ENCODE measurements at regions of chr5 and their contacts with region 1.

Region 1: DNA sequence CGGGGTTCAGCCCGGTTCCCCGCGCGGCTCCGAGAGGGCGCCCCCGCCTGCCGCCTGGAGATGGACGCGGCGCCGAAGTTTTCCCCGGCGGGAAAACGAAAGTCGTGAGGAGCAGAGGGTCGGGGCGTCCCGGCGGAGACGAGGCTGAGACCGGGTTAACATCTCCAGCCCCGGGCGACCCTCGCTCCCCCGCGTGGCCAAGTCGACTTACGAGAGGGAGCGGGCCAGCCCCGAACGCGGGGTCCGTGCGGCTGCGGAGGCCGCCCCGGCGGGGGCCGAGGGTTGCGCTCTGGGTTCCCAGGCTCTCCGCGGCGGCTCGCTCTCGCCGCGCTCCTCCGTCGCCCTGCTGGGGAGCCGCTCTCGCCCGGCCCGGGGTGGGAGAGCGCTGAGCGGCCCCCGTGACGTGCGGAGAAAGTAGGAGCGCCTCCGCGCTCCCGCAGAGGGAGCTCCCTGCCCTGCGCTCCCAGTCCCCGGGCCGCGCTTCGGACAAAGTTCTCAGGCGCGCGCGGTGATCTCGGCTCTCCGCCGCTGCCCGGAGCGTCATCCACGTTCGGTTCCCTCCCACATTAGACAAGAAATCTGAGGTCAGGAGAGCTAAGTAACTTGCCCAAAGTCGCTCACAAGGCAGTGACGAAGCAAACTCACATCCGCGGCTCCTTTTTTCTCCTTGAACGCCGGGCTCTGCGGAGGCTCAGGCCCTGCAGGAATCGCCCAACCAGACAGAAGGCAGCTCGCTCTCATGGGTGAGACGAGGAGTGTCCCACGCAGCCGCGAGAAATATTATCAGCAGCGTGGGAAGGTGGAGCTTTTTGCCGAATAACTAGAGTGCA is 1.2 kb upstream of the GCNT4 start:
- DNase-seq: peak; percentile 35 to 79 (median 68)
- ATAC-seq: peak; percentile 45
- H3K4me3 ChIP-seq: peak overlapping the region; percentile 65 to 71
- H3K4me3 Mint-ChIP-seq: peak overlapping the region; percentile 93
- H3K27ac ChIP-seq: peak overlapping the region; percentile 75 to 82
- H3K27ac Mint-ChIP-seq: peak overlapping the region; percentile 98
- H3K4me1 ChIP-seq: peaks cover 73% of the 10 kb centered on the region
- H3K4me1 Mint-ChIP-seq: peaks cover 84% of the 10 kb centered on the region
- H3K27me3 ChIP-seq: peaks cover 0 to 4% of the 10 kb centered on the region in 2 experiments
- H3K27me3 Mint-ChIP-seq: no peaks in the 10 kb centered on the region
- CTCF ChIP-seq: peak; percentile 5

Region 2: GRCh38 chr5:74865804-74866595 is 187.5 kb before region 1 on chr5 and contains the start of gene FAM169A:
- CTCF ChIA-PET with region 1: interaction called, 4 read pairs
- POLR2A ChIA-PET with region 1: no interaction called
- intact Hi-C with region 1: loop called (anchors 5 to 10 kb)
- DNase-seq: peak; percentile 22 to 81 (median 56)
- ATAC-seq: peak; percentile 74
- H3K4me3 ChIP-seq: peak within 1 kb of the TSS; percentile 78 to 86
- H3K4me3 Mint-ChIP-seq: peak within 1 kb of the TSS; percentile 94
- H3K27ac ChIP-seq: peak within 1 kb of the TSS; percentile 58 to 71
- H3K27ac Mint-ChIP-seq: peak within 1 kb of the TSS; percentile 92
- H3K4me1 ChIP-seq: peaks cover 24% of the 10 kb centered on the region
- H3K4me1 Mint-ChIP-seq: peaks cover 40% of the 10 kb centered on the region
- H3K27me3 ChIP-seq: no peaks in the 10 kb centered on the region
- H3K27me3 Mint-ChIP-seq: no peaks in the 10 kb centered on the region
- CTCF ChIP-seq: no peak
- total RNA-seq, gene FAM169A: 21.0 to 21.6 TPM

Region 3: DNA sequence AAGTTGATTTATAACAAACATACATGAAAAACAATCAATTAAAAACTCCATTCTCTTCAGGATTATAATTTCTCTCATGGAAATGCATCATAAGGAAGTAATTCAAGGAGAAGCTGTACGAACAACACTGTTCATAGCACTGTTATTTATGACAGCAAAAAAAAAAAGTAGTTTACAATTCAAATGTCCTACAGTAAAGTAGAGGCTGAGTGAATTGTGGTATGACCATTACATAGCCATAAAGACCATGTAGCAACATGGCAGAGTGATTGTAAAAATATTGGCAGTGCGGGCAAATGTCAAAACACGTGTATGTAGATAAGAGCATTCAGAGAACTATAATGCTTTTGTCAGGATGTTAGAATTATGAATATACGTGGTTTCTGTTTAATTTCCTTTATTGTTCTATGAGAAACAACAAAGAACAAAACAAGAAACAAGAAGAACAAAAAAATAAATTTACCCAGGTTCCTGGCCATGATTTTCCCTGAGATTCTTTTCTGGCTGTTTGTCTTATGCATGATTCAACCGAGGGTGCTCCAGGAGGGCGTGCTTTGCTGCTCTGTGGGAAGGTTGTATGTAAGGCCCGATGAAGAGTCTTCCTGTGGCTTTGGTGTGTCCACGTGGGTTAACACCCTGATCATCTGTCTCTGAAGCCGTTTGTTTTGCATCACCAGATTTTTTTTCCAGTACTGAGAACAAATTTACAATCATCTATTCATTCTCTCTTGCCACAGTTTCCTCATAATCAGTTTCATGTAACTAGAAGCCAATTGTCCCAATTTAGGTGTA is 30.0 kb before region 1 on chr5:
- CTCF ChIA-PET with region 1: interaction called, 13 read pairs
- POLR2A ChIA-PET with region 1: interaction called, 3 read pairs
- intact Hi-C with region 1: no loop called
- DNase-seq: peak in 8 of 9 experiments; percentile 18 to 81 (median 52)
- ATAC-seq: peak; percentile 79
- H3K4me3 ChIP-seq: no peak overlapping the region
- H3K4me3 Mint-ChIP-seq: peak overlapping the region; percentile 63
- H3K27ac ChIP-seq: peak overlapping the region in 1 of 2 experiments; percentile 42
- H3K27ac Mint-ChIP-seq: peak overlapping the region; percentile 90
- H3K4me1 ChIP-seq: peaks cover 34% of the 10 kb centered on the region
- H3K4me1 Mint-ChIP-seq: peaks cover 55% of the 10 kb centered on the region
- H3K27me3 ChIP-seq: no peaks in the 10 kb centered on the region
- H3K27me3 Mint-ChIP-seq: no peaks in the 10 kb centered on the region
- CTCF ChIP-seq: no peak

Region 4: DNA sequence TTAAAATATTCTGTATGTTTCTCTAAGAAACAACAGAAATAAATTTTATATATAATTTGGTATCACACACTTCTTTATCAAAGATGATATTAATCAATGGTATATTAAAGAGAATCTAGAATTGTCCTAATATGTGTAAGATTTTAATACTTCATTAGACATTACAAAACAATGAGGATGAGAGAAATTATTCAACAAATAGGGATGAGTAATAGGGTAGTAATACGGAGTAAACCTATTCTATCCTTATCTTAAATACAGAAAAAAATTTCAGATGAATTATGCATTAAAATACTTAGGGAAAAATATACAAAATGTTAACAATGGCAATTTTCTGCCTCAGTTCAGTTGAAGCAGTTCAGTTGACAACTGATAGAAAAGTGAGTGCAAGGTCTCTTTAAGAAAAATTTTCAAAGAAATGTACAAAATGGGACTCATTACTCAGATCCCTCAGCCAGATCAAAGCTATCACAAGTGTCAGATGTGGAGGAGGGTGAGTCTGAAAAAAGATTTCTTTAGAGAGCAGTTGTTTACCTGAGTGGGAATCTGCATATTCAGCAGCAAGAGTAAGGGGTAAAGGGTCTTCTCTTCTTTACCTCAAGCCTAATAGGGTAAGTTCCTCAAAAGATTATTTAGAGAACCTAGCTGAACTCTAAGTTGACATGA is 55.5 kb after region 1 on chr5:
- CTCF ChIA-PET with region 1: interaction called, 7 read pairs
- POLR2A ChIA-PET with region 1: interaction called, 3 read pairs
- intact Hi-C with region 1: loop called (anchors 5 kb)
- DNase-seq: peak in 2 of 9 experiments; percentile 12 to 31
- ATAC-seq: peak; percentile 36
- H3K4me3 ChIP-seq: no peak overlapping the region
- H3K4me3 Mint-ChIP-seq: no peak overlapping the region
- H3K27ac ChIP-seq: no peak overlapping the region
- H3K27ac Mint-ChIP-seq: peak overlapping the region; percentile 15
- H3K4me1 ChIP-seq: peaks cover 14% of the 10 kb centered on the region
- H3K4me1 Mint-ChIP-seq: peaks cover 17% of the 10 kb centered on the region
- H3K27me3 ChIP-seq: no peaks in the 10 kb centered on the region
- H3K27me3 Mint-ChIP-seq: no peaks in the 10 kb centered on the region
- CTCF ChIP-seq: no peak

Region 5: GRCh38 chr5:75130818-75131349 is 77.4 kb after region 1 on chr5:
- CTCF ChIA-PET with region 1: no interaction called
- POLR2A ChIA-PET with region 1: no interaction called
- intact Hi-C with region 1: no loop called
- DNase-seq: no peak
- ATAC-seq: no peak
- H3K4me3 ChIP-seq: no peak overlapping the region
- H3K4me3 Mint-ChIP-seq: no peak overlapping the region
- H3K27ac ChIP-seq: no peak overlapping the region
- H3K27ac Mint-ChIP-seq: no peak overlapping the region
- H3K4me1 ChIP-seq: no peaks in the 10 kb centered on the region
- H3K4me1 Mint-ChIP-seq: no peaks in the 10 kb centered on the region
- H3K27me3 ChIP-seq: no peaks in the 10 kb centered on the region
- H3K27me3 Mint-ChIP-seq: no peaks in the 10 kb centered on the region
- CTCF ChIP-seq: no peak

Region 6: DNA sequence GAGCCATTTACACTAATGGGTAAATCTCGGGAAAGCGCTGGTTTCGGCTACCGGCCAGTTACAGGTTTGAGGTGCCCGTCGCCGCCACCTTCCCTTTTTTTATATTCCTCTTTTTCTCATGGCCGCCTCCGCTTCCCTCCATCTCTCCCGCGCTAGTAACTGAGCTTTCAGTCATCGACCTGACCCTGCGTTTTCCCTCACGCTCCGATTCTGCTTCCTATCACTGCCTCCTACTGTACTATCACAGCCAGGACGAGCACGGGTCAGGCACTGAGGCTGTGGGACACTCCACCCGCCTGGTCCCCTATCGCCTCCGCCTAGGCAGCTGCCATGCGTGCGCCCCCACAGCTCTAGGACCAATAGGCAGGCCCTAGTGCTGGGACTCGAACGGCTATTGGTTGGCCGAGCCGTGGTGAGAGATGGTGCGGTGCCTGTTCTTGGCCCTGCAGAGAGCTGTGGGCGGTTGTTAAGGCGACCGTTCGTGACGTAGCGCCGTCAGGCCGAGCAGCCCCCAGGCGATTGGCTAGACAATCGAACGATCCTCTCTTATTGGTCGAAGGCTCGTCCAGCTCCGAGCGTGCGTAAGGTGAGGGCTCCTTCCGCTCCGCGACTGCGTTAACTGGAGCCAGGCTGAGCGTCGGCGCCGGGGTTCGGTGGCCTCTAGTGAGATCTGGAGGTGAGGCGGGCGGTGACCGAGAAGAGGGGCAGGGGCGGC is 283.3 kb after region 1 on chr5 and contains the start of gene HMGCR:
- CTCF ChIA-PET with region 1: interaction called, 5 read pairs
- POLR2A ChIA-PET with region 1: interaction called, 6 read pairs
- intact Hi-C with region 1: loop called (anchors 1 to 5 kb)
- DNase-seq: peak; percentile 93 to 99 (median 97)
- ATAC-seq: peak; percentile 92
- H3K4me3 ChIP-seq: peak within 1 kb of the TSS; percentile 72 to 96
- H3K4me3 Mint-ChIP-seq: no peak within 1 kb of the TSS
- H3K27ac ChIP-seq: peak within 1 kb of the TSS; percentile 87 to 92
- H3K27ac Mint-ChIP-seq: no peak within 1 kb of the TSS
- H3K4me1 ChIP-seq: peaks cover 18% of the 10 kb centered on the region
- H3K4me1 Mint-ChIP-seq: peaks cover 35% of the 10 kb centered on the region
- H3K27me3 ChIP-seq: no peaks in the 10 kb centered on the region
- H3K27me3 Mint-ChIP-seq: no peaks in the 10 kb centered on the region
- CTCF ChIP-seq: no peak
- total RNA-seq, gene HMGCR: 72.8 to 73.3 TPM

Region 7: DNA sequence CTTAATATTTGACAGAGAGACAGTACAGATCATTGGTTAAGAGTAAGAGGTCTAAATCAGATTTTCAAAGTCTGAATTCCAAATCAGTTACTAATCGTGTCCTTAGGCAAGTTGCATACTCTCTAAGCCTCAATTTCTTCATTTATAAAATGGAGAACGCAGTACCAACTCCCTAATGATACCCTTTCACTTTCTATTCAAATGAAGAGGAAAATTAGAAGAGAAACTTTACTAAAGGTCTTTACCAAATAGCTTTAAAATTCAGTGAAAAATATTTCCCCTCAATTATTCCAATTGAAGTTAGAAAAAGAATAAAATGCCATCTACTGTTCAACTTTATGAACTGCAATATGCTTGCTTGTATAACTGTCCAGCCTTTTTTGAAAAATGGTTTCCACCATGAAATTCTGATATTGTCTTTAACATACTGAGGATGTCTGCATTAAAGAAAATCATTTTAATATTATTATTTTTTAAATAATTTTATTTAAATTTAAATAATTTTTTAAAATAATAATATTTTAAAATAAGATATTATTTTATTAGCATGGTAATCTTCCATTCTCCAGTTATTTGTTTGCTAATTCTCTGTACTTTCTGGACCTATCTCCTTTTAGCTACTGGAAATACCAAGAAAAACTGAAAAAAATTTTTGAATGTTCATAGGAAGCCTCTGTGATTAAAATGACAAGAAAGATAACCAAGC is 627.8 kb after region 1 on chr5:
- CTCF ChIA-PET with region 1: no interaction called
- POLR2A ChIA-PET with region 1: interaction called, 3 read pairs
- intact Hi-C with region 1: loop called (anchors 10 kb)
- DNase-seq: peak in 2 of 9 experiments; percentile 45 to 61
- ATAC-seq: peak; percentile 49
- H3K4me3 ChIP-seq: no peak overlapping the region
- H3K4me3 Mint-ChIP-seq: no peak overlapping the region
- H3K27ac ChIP-seq: no peak overlapping the region
- H3K27ac Mint-ChIP-seq: no peak overlapping the region
- H3K4me1 ChIP-seq: peaks cover 10% of the 10 kb centered on the region
- H3K4me1 Mint-ChIP-seq: peaks cover 8% of the 10 kb centered on the region
- H3K27me3 ChIP-seq: no peaks in the 10 kb centered on the region
- H3K27me3 Mint-ChIP-seq: no peaks in the 10 kb centered on the region
- CTCF ChIP-seq: peak; percentile 90

Region 8: DNA sequence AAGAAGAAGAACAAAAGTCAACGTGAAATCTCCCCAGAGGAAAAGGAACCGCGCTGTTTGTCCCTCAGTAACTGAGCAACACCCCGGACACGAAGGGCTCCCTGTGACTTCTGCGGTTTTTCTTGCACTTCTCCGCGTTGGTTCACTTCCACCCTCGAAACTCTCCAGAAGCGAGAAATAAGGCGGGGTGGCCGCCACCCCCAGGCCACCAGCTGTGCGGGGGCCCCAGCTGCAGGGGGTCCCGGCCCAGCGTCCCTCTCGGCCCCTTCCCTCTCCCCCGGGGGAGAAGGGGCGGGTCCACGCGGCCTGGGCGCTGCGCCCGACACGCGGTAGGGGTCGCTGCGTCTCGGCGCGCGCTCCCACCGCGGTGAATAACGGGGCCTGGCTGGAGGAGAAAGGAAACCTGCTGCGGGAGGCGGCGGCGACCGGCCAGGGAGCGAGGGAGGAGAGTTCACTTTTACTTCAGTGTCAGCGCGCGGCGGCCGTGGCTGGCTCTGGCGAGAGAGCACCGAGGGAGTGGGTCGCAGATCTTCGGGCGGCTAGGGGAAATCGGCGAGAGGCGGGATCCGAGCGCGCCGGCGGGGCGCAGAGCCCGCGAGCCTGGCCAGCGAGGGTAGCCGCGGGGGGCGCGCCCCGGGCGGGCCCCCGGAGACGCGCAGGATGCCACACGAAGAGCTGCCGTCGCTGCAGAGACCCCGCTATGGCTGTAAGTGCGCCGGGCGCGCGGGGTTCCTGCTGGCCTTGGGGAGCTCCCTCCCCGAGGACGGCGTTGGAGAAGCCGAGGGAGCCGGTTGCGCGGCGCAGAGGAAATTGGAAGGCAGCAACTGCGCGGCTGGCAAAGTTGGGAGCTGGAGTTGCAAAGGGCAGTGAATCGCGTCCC is 1349.6 kb after region 1 on chr5 and contains the start of gene IQGAP2:
- CTCF ChIA-PET with region 1: no interaction called
- POLR2A ChIA-PET with region 1: no interaction called
- intact Hi-C with region 1: loop called in 1 of 2 experiments (anchors 10 kb)
- DNase-seq: peak; percentile 73 to 97 (median 82)
- ATAC-seq: peak; percentile 54
- H3K4me3 ChIP-seq: peak within 1 kb of the TSS; percentile 77 to 93
- H3K4me3 Mint-ChIP-seq: peak within 1 kb of the TSS; percentile 95
- H3K27ac ChIP-seq: peak within 1 kb of the TSS; percentile 86 to 90
- H3K27ac Mint-ChIP-seq: peak within 1 kb of the TSS; percentile 98
- H3K4me1 ChIP-seq: peaks cover 44% of the 10 kb centered on the region
- H3K4me1 Mint-ChIP-seq: peaks cover 54% of the 10 kb centered on the region
- H3K27me3 ChIP-seq: no peaks in the 10 kb centered on the region
- H3K27me3 Mint-ChIP-seq: no peaks in the 10 kb centered on the region
- CTCF ChIP-seq: peak; percentile 70
- total RNA-seq, gene IQGAP2: 30.9 to 34.3 TPM

Measured in CD8-positive, alpha-beta T cell (primary cell).